Heart right ventricle (tissue), 16 donors: ENCODE measurements at regions of chr5 and their contacts with region 1.

Region 1: GRCh38 chr5:64612344-64612961 is 77.8 kb upstream of the SHISAL2B start:
- DNase-seq: peak in 1 of 2 donors; percentile 54
- ATAC-seq: peak in 4 of 8 donors; percentile 46 to 68 (median 55)
- H3K4me3 ChIP-seq: no peak overlapping the region
- H3K27ac ChIP-seq: no peak overlapping the region
- H3K4me1 ChIP-seq: peaks cover 0 to 4% (median 0%) of the 10 kb centered on the region in 9 donors
- H3K27me3 ChIP-seq: peaks cover 0 to 3% (median 0%) of the 10 kb centered on the region in 7 donors
- CTCF ChIP-seq: peak; percentile 44 to 82 (median 74)

Region 2: DNA sequence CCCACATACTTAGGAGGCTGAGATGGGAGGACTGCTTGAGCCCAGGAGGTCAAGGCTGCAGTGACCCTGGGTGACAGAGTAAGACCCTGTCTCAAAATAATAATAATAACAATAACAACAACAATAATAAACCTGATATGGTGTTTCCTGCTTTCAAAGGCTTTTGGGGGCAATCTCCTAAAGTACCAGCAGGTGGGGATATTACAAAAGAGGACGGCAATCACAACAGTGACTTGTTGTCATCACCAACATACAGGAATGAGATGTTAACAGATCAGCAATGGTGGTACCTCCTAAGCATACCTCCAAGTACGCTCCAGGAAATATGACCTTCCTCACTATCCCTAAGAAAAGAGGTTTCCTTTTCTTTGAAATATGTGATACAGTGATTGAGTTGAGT is 537.9 kb before region 1 on chr5:
- intact Hi-C with region 1: loop called in 4 of 10 experiments (anchors 5 to 10 kb)
- DNase-seq: no peak
- ATAC-seq: peak in 1 of 8 donors; percentile 41
- H3K4me3 ChIP-seq: no peak overlapping the region
- H3K27ac ChIP-seq: no peak overlapping the region
- H3K4me1 ChIP-seq: no peaks in the 10 kb centered on the region
- H3K27me3 ChIP-seq: no peaks in the 10 kb centered on the region
- CTCF ChIP-seq: peak in 8 of 9 donors; percentile 20 to 65 (median 58)

Region 3: DNA sequence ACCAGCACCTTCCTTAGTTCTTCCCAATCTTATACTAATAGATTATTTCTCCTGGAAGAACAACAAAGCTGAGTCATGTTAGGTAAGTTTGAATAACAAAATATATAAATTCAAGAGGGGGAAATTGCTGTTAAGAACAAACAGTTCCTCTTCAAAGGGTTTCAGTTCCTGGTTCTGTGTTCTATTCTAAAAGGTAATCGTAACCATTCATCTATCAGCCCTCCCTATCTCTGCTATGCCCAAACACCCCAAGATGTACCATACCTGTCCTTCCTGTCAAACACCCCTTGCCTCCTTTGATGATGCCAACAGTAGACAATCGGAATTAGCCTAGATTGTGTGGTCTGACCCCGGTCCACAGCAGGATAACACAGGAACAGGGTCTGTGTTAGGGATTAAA is 451.0 kb before region 1 on chr5:
- intact Hi-C with region 1: loop called in 2 of 10 experiments (anchors 10 kb)
- DNase-seq: no peak
- ATAC-seq: no peak
- H3K4me3 ChIP-seq: no peak overlapping the region
- H3K27ac ChIP-seq: no peak overlapping the region
- H3K4me1 ChIP-seq: peaks cover 0 to 19% (median 8%) of the 10 kb centered on the region in 9 donors
- H3K27me3 ChIP-seq: peaks cover 0 to 31% (median 0%) of the 10 kb centered on the region in 7 donors
- CTCF ChIP-seq: no peak

Region 4: GRCh38 chr5:64347309-64347708 is 265.1 kb before region 1 on chr5:
- intact Hi-C with region 1: loop called in 1 of 10 experiments (anchors 10 kb)
- DNase-seq: no peak
- ATAC-seq: no peak
- H3K4me3 ChIP-seq: no peak overlapping the region
- H3K27ac ChIP-seq: no peak overlapping the region
- H3K4me1 ChIP-seq: peaks cover 0 to 9% (median 0%) of the 10 kb centered on the region in 9 donors
- H3K27me3 ChIP-seq: no peaks in the 10 kb centered on the region
- CTCF ChIP-seq: peak in 1 of 9 donors; percentile 14

Region 5: GRCh38 chr5:64487283-64487682 is 125.2 kb before region 1 on chr5:
- intact Hi-C with region 1: no loop called
- DNase-seq: no peak
- ATAC-seq: no peak
- H3K4me3 ChIP-seq: no peak overlapping the region
- H3K27ac ChIP-seq: no peak overlapping the region
- H3K4me1 ChIP-seq: no peaks in the 10 kb centered on the region
- H3K27me3 ChIP-seq: peaks cover 0 to 9% (median 0%) of the 10 kb centered on the region in 7 donors
- CTCF ChIP-seq: no peak

Region 6: DNA sequence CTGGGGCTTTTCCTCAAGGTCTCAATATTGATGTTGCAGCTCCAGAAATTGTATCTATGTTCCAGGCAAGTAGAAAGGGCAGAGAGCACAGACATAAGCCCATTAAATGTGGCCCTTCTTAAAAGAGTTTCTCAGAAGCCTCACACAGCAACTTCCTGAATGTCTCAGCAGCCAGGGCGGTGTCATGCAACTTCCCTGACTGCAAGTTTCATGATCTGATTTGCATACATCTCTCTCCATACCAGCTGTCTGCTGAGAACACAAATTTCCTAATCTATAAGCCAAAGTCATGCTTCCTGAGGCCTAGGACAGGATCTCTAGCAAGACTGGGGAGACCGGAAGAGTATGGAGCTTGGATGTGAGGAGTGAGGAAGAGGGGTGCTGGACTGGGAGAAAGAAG is 93.6 kb before region 1 on chr5:
- intact Hi-C with region 1: loop called in 2 of 10 experiments (anchors 5 kb)
- DNase-seq: no peak
- ATAC-seq: no peak
- H3K4me3 ChIP-seq: no peak overlapping the region
- H3K27ac ChIP-seq: no peak overlapping the region
- H3K4me1 ChIP-seq: peaks cover 0 to 16% (median 0%) of the 10 kb centered on the region in 9 donors
- H3K27me3 ChIP-seq: no peaks in the 10 kb centered on the region
- CTCF ChIP-seq: no peak